PC-9 (cell line): ENCODE measurements at regions of chr22 and their contacts with region 1.

Region 1: GRCh38 chr22:37658133-37659065 is at the start of gene PDXP:
- DNase-seq: peak; percentile 99
- H3K4me3 ChIP-seq: peak within 1 kb of the TSS; percentile 69
- H3K27ac ChIP-seq: no peak within 1 kb of the TSS
- H3K4me1 ChIP-seq: peaks cover 28% of the 10 kb centered on the region
- H3K27me3 ChIP-seq: no peaks in the 10 kb centered on the region
- CTCF ChIP-seq: no peak
- total RNA-seq, gene PDXP: 10.9 and 13.5 TPM in 2 replicates

Region 2: DNA sequence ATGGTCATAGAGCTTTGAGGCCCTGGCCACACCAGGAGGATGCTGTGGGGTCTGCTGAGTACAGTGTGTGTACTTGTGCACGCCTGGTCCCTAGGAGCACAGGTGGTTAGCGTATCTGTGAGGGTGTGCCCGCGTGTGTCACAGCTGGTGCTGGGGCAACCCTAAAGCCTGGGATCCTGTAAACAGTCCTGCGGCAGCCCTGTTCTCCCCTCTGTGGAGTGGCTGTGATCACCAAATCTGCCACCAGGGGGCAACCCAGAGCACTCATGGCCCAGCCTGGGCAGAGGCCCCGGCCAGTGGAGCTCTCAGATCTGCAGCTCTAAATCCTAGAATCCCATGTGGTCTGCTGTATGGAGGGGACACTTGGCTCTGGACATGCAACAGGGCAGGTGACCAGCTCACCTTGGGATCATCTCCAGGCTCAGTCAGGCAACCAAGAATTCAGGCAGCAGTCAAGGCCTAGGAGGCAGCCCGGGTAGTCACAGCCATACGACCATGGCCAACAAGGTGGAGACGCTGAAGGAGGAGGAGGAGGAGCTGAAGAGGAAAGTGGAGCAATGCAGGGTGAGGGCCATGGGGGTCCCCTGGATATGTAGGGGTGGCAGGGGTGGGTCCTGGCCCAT is 15.1 kb before region 1 on chr22:
- CTCF ChIA-PET with region 1: interaction called, 25 read pairs
- POLR2A ChIA-PET with region 1: interaction called, 4 read pairs
- intact Hi-C with region 1: no loop called
- DNase-seq: peak; percentile 65 to 86
- H3K4me3 ChIP-seq: no peak overlapping the region
- H3K27ac ChIP-seq: no peak overlapping the region
- H3K4me1 ChIP-seq: peaks cover 31% of the 10 kb centered on the region
- H3K27me3 ChIP-seq: no peaks in the 10 kb centered on the region
- CTCF ChIP-seq: peak; percentile 99

Region 3: DNA sequence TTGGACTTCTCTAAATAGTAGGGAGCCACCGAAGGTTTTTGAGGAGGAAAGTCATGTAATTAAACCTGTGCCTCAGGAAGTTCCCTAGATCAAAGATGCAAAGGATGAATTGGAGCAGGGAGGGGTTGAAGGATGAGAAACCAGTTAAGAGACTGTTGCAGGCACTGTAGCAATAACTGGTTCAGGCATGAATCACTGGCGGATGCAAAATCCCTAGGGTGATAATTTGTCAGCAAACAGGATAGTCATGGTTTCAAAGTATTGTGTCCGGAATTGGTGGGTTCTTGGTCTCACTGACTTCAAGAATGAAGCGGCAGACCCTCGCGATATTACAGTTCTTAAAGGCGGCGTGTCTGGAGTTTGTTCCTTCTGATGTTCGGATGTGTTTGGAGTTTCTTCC is 58.3 kb after region 1 on chr22:
- CTCF ChIA-PET with region 1: interaction called, 11 read pairs
- POLR2A ChIA-PET with region 1: no interaction called
- intact Hi-C with region 1: no loop called
- DNase-seq: peak in 1 of 2 experiments; percentile 80
- H3K4me3 ChIP-seq: no peak overlapping the region
- H3K27ac ChIP-seq: 0 out of 2 replicates have a peak overlapping the region, but pooled peaks have one; percentile 8
- H3K4me1 ChIP-seq: peaks cover 12% of the 10 kb centered on the region; the same call in 1 of the 2 replicates
- H3K27me3 ChIP-seq: no peaks in the 10 kb centered on the region
- CTCF ChIP-seq: no peak

Region 4: GRCh38 chr22:37734964-37735451 is 76.6 kb after region 1 on chr22:
- CTCF ChIA-PET with region 1: interaction called, 7 read pairs
- POLR2A ChIA-PET with region 1: interaction called, 22 read pairs
- intact Hi-C with region 1: no loop called
- DNase-seq: peak; percentile 64 to 68
- H3K4me3 ChIP-seq: no peak overlapping the region
- H3K27ac ChIP-seq: no peak overlapping the region
- H3K4me1 ChIP-seq: no peaks in the 10 kb centered on the region
- H3K27me3 ChIP-seq: no peaks in the 10 kb centered on the region
- CTCF ChIP-seq: peak; percentile 77

Region 5: DNA sequence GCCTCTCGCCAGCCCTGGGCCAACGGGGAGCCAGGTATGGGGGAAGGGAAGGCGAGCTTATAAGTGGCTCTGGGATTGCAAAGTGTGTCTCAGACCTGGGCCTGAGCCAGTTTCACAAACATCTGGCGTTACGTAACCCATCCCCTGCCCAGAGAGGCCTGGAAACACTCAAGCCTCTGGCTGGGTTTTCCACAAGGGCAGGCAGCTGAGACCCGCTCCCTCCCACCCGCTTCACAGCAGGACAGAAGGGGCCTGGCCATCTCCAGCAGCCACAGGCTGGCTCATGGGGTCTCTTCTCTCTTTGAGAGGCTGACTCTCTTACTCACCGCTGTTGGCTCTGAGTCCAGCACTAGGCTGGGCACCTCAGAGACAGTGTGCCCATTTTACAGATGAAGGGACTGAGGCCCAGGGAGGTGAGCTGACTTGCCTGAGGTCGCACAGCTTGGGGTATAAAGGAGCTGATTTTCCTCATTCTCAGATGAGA is 83.0 kb after region 1 on chr22:
- CTCF ChIA-PET with region 1: interaction called, 7 read pairs
- POLR2A ChIA-PET with region 1: interaction called, 22 read pairs
- intact Hi-C with region 1: no loop called
- DNase-seq: no peak
- H3K4me3 ChIP-seq: no peak overlapping the region
- H3K27ac ChIP-seq: peak overlapping the region; percentile 57
- H3K4me1 ChIP-seq: peaks cover 43% of the 10 kb centered on the region
- H3K27me3 ChIP-seq: no peaks in the 10 kb centered on the region
- CTCF ChIP-seq: no peak